CD8-positive, alpha-beta T cell (primary cell): ENCODE measurements at regions of chr2 and their contacts with region 1.

Region 1: GRCh38 chr2:45422921-45423320 is 188.1 kb downstream of the SRBD1 start:
- DNase-seq: no peak
- ATAC-seq: no peak
- H3K4me3 ChIP-seq: no peak overlapping the region
- H3K4me3 Mint-ChIP-seq: no peak overlapping the region
- H3K27ac ChIP-seq: no peak overlapping the region
- H3K27ac Mint-ChIP-seq: no peak overlapping the region
- H3K4me1 ChIP-seq: no peaks in the 10 kb centered on the region
- H3K4me1 Mint-ChIP-seq: peaks cover 2% of the 10 kb centered on the region
- H3K27me3 ChIP-seq: no peaks in the 10 kb centered on the region
- H3K27me3 Mint-ChIP-seq: no peaks in the 10 kb centered on the region
- CTCF ChIP-seq: no peak

Region 2: GRCh38 chr2:45353879-45354278 is 69.0 kb before region 1 on chr2:
- CTCF ChIA-PET with region 1: no interaction called
- POLR2A ChIA-PET with region 1: no interaction called
- intact Hi-C with region 1: no loop called
- DNase-seq: no peak
- ATAC-seq: no peak
- H3K4me3 ChIP-seq: no peak overlapping the region
- H3K4me3 Mint-ChIP-seq: no peak overlapping the region
- H3K27ac ChIP-seq: no peak overlapping the region
- H3K27ac Mint-ChIP-seq: no peak overlapping the region
- H3K4me1 ChIP-seq: no peaks in the 10 kb centered on the region
- H3K4me1 Mint-ChIP-seq: no peaks in the 10 kb centered on the region
- H3K27me3 ChIP-seq: no peaks in the 10 kb centered on the region
- H3K27me3 Mint-ChIP-seq: no peaks in the 10 kb centered on the region
- CTCF ChIP-seq: no peak

Region 3: DNA sequence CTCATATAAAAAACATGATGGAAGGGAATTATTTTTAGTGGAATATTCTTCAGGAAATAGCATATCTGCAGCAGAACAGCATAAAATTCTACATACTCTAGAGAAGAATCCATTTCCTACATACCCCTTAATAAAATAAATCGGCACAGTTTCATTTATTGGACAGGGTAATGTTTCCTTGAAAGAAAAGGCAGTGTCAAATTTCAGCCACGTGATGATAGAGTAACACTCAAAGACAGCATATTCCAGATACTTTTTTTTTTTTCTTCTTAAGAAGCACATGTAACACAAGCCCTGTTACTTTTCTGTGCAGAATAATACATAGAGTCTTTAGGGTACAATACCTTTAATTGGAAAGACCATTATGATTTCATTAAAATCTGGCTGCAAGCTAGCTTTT is 16.3 kb before region 1 on chr2:
- CTCF ChIA-PET with region 1: no interaction called
- POLR2A ChIA-PET with region 1: no interaction called
- intact Hi-C with region 1: loop called in 1 of 2 experiments (anchors 1 kb)
- DNase-seq: no peak
- ATAC-seq: no peak
- H3K4me3 ChIP-seq: no peak overlapping the region
- H3K4me3 Mint-ChIP-seq: no peak overlapping the region
- H3K27ac ChIP-seq: no peak overlapping the region
- H3K27ac Mint-ChIP-seq: no peak overlapping the region
- H3K4me1 ChIP-seq: no peaks in the 10 kb centered on the region
- H3K4me1 Mint-ChIP-seq: no peaks in the 10 kb centered on the region
- H3K27me3 ChIP-seq: no peaks in the 10 kb centered on the region
- H3K27me3 Mint-ChIP-seq: no peaks in the 10 kb centered on the region
- CTCF ChIP-seq: no peak

Region 4: DNA sequence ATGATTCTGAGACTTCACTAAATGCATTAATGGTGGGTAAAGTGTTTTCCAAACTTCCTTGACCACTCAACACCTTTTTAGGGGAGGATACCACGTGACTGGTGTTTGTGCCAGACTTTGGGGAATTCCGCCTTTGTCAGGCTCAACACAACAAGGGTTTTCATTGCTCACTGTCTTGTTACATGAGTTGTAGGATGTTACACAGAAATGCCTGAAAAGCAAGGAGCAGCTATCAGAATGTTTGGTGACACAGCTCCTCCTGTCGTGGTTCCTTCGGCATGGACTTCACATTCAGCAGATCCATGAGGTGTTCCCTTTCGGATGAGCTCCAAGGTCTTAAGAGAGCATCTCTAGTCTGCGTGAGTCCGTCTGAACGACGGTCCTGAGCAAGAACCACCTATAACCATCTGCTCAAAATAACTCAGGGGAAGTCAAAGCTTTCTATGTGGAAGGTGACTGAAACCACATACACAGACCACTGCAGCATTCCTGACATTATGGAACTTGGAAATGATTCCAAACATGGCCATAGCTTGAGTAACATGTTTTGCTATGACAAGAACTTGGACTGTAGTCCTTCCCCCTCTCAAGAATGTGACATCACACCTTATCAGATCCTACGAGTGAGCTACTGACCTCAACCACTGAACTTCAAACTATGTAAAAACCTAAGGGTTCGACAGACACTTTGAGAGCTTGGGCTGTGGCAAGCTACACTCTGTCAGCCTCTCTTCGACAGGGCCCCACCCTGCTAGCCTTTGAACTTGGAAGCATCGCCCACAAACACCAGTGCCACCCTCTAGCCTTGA is 1435.2 kb after region 1 on chr2:
- CTCF ChIA-PET with region 1: no interaction called
- POLR2A ChIA-PET with region 1: no interaction called
- intact Hi-C with region 1: no loop called
- DNase-seq: peak in 2 of 9 experiments; percentile 9 to 34
- ATAC-seq: peak; percentile 42
- H3K4me3 ChIP-seq: no peak overlapping the region
- H3K4me3 Mint-ChIP-seq: no peak overlapping the region
- H3K27ac ChIP-seq: no peak overlapping the region
- H3K27ac Mint-ChIP-seq: no peak overlapping the region
- H3K4me1 ChIP-seq: no peaks in the 10 kb centered on the region
- H3K4me1 Mint-ChIP-seq: no peaks in the 10 kb centered on the region
- H3K27me3 ChIP-seq: peaks cover 0 to 2% of the 10 kb centered on the region in 2 experiments
- H3K27me3 Mint-ChIP-seq: no peaks in the 10 kb centered on the region
- CTCF ChIP-seq: no peak